ENCODE measurements at regions of chr9 and their contacts with region 1.

Region 1: DNA sequence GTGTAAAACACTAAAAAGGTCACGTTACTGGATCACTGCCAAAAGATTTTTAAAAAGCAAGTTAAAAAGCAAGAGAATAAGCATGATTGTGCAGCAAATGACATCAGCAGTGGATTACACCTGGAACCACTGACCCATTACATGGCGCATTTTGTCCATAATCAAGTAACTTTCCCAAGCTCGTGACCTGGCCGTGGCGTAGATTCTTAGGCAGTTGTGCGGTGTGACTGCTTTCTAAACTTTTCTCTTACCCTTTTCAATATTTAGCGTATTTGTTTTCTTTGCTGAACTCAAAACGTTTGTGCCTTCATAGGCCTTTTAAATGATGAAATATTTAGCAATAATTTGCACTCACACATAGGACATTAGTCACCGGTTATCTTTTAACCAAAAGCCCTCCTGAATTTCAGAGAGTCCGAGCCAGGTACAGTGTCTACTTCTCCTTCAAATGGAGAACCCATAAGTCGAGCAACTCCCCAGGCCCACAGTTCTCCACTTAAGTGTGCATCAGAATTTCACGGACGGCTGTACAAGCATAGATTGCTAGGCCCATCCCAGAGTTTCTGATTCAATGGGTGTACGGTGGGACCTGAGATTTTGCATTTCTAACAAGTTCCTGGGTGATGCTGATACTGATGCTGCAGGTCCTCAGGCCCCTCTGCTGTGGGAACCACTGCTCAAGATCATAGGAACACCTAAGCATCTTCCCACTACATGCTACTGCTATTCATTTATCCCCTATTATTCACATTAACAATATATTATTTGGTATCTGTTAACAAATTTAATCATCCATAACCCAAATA is 144.4 kb downstream of the GLIS3 start:
- DNase-seq: no peak
- ATAC-seq: no peak
- H3K4me3 ChIP-seq: no peak overlapping the region
- H3K27ac ChIP-seq: no peak overlapping the region
- H3K4me1 ChIP-seq: no peaks in the 10 kb centered on the region
- H3K27me3 ChIP-seq: no peaks in the 10 kb centered on the region
- CTCF ChIP-seq: no peak

Region 2: DNA sequence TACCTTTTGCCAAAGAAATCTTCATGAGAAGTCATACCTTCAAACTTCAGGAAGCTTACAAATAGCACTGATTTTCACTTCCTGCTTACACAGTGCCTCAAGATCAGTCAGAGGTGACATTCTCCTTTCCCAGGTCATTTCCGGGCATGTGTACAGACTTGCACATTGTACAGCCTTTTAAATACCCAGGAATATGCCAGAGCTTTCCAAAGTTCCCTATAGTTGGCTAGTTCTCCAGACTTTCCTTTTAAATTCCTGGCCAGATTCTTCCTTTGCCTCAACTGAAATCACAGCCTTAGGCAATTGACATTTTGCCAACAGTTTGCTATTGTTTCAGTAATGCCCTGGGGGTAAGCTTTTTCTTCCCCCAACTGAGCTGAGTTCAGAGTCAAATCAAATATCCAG is 676.9 kb before region 1 on chr9:
- CTCF ChIA-PET with region 1: no interaction called
- POLR2A ChIA-PET with region 1: no interaction called
- in situ Hi-C with region 1: no loop called
- intact Hi-C with region 1: no loop called
- DNase-seq: no peak
- ATAC-seq: no peak
- H3K4me3 ChIP-seq: no peak overlapping the region
- H3K27ac ChIP-seq: no peak overlapping the region
- H3K4me1 ChIP-seq: no peaks in the 10 kb centered on the region
- H3K27me3 ChIP-seq: no peaks in the 10 kb centered on the region
- CTCF ChIP-seq: no peak

Region 3: DNA sequence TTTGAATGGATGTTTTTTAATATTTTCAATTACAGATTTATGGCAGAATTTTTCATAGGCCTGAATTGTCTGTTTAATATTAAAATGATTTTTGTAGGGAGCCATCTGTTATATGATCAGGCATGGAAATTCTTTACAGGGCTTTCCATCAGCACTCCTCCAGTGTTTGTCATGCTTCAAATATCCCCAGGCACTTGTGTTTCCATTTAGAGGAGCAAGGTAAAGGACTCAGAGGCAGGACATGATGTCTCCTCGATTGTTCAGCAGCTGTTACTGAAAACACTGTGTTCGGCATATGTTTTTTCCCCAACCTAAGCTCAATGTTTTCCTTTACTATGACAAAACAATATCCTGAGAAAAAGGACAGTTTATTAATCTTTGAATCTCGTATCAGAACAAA is 457.3 kb before region 1 on chr9:
- CTCF ChIA-PET with region 1: no interaction called
- POLR2A ChIA-PET with region 1: no interaction called
- in situ Hi-C with region 1: no loop called
- intact Hi-C with region 1: no loop called
- DNase-seq: no peak
- ATAC-seq: no peak
- H3K4me3 ChIP-seq: no peak overlapping the region
- H3K27ac ChIP-seq: no peak overlapping the region
- H3K4me1 ChIP-seq: no peaks in the 10 kb centered on the region
- H3K27me3 ChIP-seq: no peaks in the 10 kb centered on the region
- CTCF ChIP-seq: no peak

Region 4: GRCh38 chr9:4079346-4079745 is 76.1 kb before region 1 on chr9:
- CTCF ChIA-PET with region 1: interaction called, 14 read pairs
- POLR2A ChIA-PET with region 1: no interaction called
- in situ Hi-C with region 1: no loop called
- intact Hi-C with region 1: no loop called
- DNase-seq: no peak
- ATAC-seq: no peak
- H3K4me3 ChIP-seq: no peak overlapping the region
- H3K27ac ChIP-seq: no peak overlapping the region
- H3K4me1 ChIP-seq: no peaks in the 10 kb centered on the region; the same call in 1 of the 2 replicates
- H3K27me3 ChIP-seq: no peaks in the 10 kb centered on the region
- CTCF ChIP-seq: no peak